Gastrocnemius medialis (tissue), 4 donors: ENCODE measurements at regions of chr22 and their contacts with region 1.

Region 1: DNA sequence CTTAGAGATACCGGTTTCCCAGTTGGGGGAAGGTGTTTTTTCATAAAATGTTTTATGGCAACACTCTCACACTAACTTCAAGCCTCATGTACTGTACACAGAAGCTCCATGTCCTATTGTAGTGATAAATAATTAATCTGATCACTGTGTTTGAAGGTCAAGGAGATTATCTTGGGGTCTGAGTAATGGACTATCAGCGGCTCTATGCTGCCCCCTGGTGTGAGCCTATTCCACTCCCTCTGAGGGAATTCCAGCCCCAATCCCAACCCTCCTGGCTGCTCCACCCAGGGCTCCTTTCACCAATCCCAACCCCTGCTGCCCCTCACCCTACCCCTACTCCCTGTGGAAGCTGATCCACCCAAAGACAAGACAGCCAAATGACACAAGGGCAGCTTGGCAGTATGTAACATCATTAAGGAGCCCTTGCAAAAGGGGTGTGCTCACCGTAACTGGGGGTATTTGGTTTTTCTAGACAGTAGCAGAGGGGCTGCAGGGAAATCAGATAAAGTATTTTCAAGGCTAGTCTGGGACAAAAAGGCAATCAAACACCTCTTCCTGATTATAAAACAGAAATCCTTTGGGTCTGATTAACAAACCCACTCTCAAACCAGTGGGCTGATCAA is 22.3 kb downstream of the HPS4 start:
- DNase-seq: peak in 1 of 2 donors; percentile 30
- ATAC-seq: peak in 1 of 2 donors; percentile 22
- H3K4me3 ChIP-seq: no peak overlapping the region
- H3K27ac ChIP-seq: no peak overlapping the region
- H3K4me1 ChIP-seq: peaks cover 0 to 3% of the 10 kb centered on the region in 2 donors
- H3K27me3 ChIP-seq: no peaks in the 10 kb centered on the region
- CTCF ChIP-seq: peak; percentile 61 to 74 (median 70)
- POLR2A ChIP-seq: no peak

Region 2: DNA sequence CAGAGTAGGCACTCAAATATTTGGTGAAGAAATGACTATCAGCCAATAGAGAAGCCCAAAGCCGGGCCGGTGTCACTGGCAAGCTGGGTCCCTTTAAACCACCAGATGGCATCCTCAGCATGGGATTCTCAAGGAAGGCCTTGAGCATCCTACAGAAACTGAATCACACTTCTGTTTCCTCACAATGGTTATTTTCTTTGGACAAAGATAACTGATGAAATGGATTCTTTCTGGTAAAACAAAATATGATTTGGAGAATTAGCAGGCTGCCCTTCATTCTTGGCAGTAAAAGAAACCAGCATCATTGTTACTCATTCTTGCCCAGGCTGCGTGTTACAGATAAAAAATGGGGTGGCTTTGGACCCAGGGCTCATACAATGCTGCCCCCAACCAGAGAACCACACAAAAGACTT is 62.6 kb before region 1 on chr22:
- in situ Hi-C with region 1: loop called in 1 of 4 experiments (anchors 5 kb)
- intact Hi-C with region 1: loop called (anchors 1 kb)
- DNase-seq: peak; percentile 29 to 40
- ATAC-seq: peak; percentile 72 to 81
- H3K4me3 ChIP-seq: no peak overlapping the region
- H3K27ac ChIP-seq: no peak overlapping the region
- H3K4me1 ChIP-seq: no peaks in the 10 kb centered on the region
- H3K27me3 ChIP-seq: no peaks in the 10 kb centered on the region
- CTCF ChIP-seq: peak; percentile 29 to 69 (median 59)
- POLR2A ChIP-seq: no peak

Region 3: GRCh38 chr22:26404851-26405421 is 56.4 kb before region 1 on chr22:
- in situ Hi-C with region 1: loop called in 1 of 4 experiments (anchors 5 kb)
- intact Hi-C with region 1: no loop called
- DNase-seq: no peak
- ATAC-seq: no peak
- H3K4me3 ChIP-seq: no peak overlapping the region
- H3K27ac ChIP-seq: no peak overlapping the region
- H3K4me1 ChIP-seq: no peaks in the 10 kb centered on the region
- H3K27me3 ChIP-seq: peaks cover 0 to 8% (median 0%) of the 10 kb centered on the region in 3 donors
- CTCF ChIP-seq: no peak
- POLR2A ChIP-seq: no peak